ENCODE measurements at regions of chr11 and their contacts with region 1.

Region 1: DNA sequence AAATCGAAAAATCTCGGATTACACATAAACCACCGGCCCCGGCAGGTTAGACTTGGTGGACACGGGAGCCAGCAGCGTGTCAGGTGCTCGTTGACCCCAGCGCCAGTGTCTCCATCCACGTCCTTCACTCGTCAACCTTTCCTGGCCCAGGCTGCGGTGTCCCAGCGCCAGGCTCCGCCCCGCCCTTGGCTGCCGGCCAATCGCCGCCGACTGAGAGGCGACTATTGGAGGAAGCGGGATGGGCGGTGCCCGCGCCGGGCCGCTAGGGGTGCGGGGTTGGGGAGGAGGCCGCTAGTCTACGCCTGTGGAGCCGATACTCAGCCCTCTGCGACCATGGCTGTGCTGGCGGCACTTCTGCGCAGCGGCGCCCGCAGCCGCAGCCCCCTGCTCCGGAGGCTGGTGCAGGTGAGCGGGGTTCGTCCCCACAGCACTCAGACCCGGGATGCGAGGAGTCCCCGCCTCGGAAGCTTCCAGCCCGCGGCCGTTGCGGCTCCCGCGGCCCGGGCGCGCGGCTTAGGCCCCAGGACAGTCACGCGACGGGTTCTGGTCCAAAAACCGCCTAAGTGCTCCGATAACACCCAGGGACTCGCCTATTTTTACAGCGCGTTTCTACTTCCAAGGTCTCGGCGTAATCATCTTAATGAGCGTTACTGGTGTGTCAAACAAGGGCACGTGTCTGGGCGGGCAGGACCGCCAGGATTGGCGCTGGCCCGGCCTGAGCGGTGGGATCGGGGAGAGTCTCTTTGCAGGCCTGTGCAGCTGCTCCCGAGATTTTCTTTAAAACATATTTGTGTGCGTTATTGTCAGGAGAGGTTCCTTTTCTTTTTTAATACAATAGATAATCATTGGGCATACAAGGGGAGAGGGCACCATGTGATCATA is at the start of gene ACAT1:
- DNase-seq: peak; percentile 96
- ATAC-seq: peak; percentile 99
- H3K4me3 Mint-ChIP-seq: peak within 1 kb of the TSS; percentile 87
- H3K27ac Mint-ChIP-seq: peak within 1 kb of the TSS; percentile 56
- H3K4me1 Mint-ChIP-seq: peaks cover 39% of the 10 kb centered on the region
- H3K27me3 Mint-ChIP-seq: no peaks in the 10 kb centered on the region
- CTCF ChIP-seq: no peak
- total RNA-seq, gene ACAT1: 50.1 and 51.1 TPM in 2 replicates

Region 2: GRCh38 chr11:107821199-107821927 is 300.2 kb before region 1 on chr11:
- CTCF ChIA-PET with region 1: no interaction called
- POLR2A ChIA-PET with region 1: no interaction called
- intact Hi-C with region 1: no loop called
- DNase-seq: no peak
- ATAC-seq: no peak
- H3K4me3 Mint-ChIP-seq: no peak overlapping the region
- H3K27ac Mint-ChIP-seq: no peak overlapping the region
- H3K4me1 Mint-ChIP-seq: peaks cover 24% of the 10 kb centered on the region
- H3K27me3 Mint-ChIP-seq: no peaks in the 10 kb centered on the region
- CTCF ChIP-seq: no peak

Region 3: GRCh38 chr11:107928046-107928766 is 193.3 kb before region 1 on chr11 and contains the start of gene RAB39A:
- CTCF ChIA-PET with region 1: no interaction called
- POLR2A ChIA-PET with region 1: no interaction called
- intact Hi-C with region 1: loop called (anchors 1 kb)
- DNase-seq: peak; percentile 82
- ATAC-seq: peak; percentile 87
- H3K4me3 Mint-ChIP-seq: peak within 1 kb of the TSS; percentile 91
- H3K27ac Mint-ChIP-seq: peak within 1 kb of the TSS; percentile 80
- H3K4me1 Mint-ChIP-seq: peaks cover 37% of the 10 kb centered on the region
- H3K27me3 Mint-ChIP-seq: peaks cover 4% of the 10 kb centered on the region
- CTCF ChIP-seq: no peak
- total RNA-seq, gene RAB39A: 3.6 and 4.1 TPM in 2 replicates

Region 4: GRCh38 chr11:108160970-108161566 is 39.6 kb after region 1 on chr11:
- CTCF ChIA-PET with region 1: no interaction called
- POLR2A ChIA-PET with region 1: no interaction called
- intact Hi-C with region 1: loop called (anchors 1 kb)
- DNase-seq: no peak
- ATAC-seq: peak; percentile 100
- H3K4me3 Mint-ChIP-seq: no peak overlapping the region
- H3K27ac Mint-ChIP-seq: peak overlapping the region; percentile 87
- H3K4me1 Mint-ChIP-seq: peaks cover 13% of the 10 kb centered on the region
- H3K27me3 Mint-ChIP-seq: no peaks in the 10 kb centered on the region
- CTCF ChIP-seq: no peak

Region 5: DNA sequence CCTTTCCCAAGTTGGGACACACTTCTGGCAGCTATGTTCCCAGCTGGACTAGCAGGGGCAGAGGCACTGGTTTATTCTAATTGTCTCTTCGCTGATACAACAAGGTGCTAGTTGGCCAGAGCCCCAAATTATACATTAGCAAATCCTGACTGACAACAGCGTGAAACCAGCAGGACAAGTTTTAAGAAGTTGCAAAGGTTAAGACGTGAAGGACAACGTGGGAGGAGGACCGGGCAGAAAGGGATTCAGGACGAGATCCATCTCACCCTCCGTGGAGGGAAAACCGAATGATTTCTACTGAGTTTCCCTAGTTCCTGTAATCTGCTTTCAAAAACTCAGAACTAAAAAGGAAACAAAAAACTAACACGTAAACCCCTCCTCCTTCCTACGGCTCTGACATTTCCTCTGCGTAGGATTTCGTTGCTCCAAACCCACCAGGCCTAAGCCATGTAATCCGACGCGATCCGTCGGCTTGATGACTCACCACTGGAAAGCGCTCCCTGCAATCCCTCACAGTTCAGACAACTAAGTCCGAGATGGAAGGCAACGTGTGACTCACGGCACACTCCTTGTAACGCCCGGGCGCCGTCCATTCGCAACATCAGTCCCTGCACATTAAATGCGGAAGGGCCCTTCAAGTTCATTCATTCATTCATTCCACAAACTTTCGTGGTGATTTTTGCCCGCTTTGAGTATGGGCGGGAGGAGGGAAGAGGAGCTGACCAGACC is 376.0 kb after region 1 on chr11:
- CTCF ChIA-PET with region 1: no interaction called
- POLR2A ChIA-PET with region 1: no interaction called
- intact Hi-C with region 1: loop called (anchors 10 kb)
- DNase-seq: peak; percentile 51
- ATAC-seq: peak; percentile 71
- H3K4me3 Mint-ChIP-seq: peak overlapping the region; percentile 100
- H3K27ac Mint-ChIP-seq: peak overlapping the region; percentile 97
- H3K4me1 Mint-ChIP-seq: peaks cover 15% of the 10 kb centered on the region
- H3K27me3 Mint-ChIP-seq: no peaks in the 10 kb centered on the region
- CTCF ChIP-seq: no peak

Region 6: DNA sequence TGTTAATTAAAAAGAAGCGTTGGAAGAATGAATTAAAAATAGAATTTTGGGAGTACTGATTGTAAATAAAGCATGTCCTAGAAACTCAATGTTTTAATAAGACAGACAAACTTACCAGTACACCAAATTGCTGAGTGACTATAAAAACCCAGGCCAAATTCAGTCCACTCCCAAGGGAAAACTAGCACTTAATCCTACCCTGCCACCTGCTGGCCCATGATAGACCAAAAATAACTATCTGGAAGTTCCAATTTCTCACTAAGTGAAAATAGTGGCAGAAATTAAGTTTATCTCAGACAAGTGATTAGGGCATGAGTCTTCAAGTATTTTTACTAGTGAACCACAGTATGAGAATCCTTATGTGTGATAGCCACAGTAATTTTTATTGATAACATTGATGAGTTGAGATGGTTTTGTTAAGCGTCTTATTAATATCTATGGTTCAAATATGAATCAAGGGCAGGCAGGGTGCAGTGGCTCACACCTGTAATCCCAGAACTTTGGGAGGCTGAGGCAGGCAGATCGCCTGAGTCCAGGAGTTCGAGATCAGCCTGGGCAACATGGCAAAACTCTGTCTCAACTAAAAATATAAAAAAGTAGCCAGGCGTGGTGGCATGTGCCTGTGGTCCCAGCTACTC is 533.6 kb after region 1 on chr11:
- CTCF ChIA-PET with region 1: interaction called, 23 read pairs
- POLR2A ChIA-PET with region 1: no interaction called
- intact Hi-C with region 1: no loop called
- DNase-seq: no peak
- ATAC-seq: peak; percentile 62
- H3K4me3 Mint-ChIP-seq: no peak overlapping the region
- H3K27ac Mint-ChIP-seq: no peak overlapping the region
- H3K4me1 Mint-ChIP-seq: peaks cover 9% of the 10 kb centered on the region
- H3K27me3 Mint-ChIP-seq: peaks cover 1% of the 10 kb centered on the region
- CTCF ChIP-seq: no peak

Measured in activated B cell treated with CpG ODN at 0.5 μM for 24 hours (primary cell).